Activated CD4-positive, alpha-beta memory T cell treated with anti-CD3 and anti-CD28 coated beads for 36 hours (primary cell): ENCODE measurements at regions of chr19 and their contacts with region 1.

Region 1: GRCh38 chr19:8158411-8159074 is 9.2 kb upstream of the FBN3 start:
- DNase-seq: peak; percentile 40
- H3K4me3 Mint-ChIP-seq: no peak overlapping the region
- H3K27ac Mint-ChIP-seq: no peak overlapping the region
- H3K4me1 Mint-ChIP-seq: peaks cover 4% of the 10 kb centered on the region
- H3K27me3 Mint-ChIP-seq: peaks cover 17% of the 10 kb centered on the region

Region 2: GRCh38 chr19:8108560-8109445 is 49.7 kb before region 1 on chr19:
- CTCF ChIA-PET with region 1: no interaction called
- POLR2A ChIA-PET with region 1: no interaction called
- intact Hi-C with region 1: no loop called
- DNase-seq: no peak
- H3K4me3 Mint-ChIP-seq: no peak overlapping the region
- H3K27ac Mint-ChIP-seq: no peak overlapping the region
- H3K4me1 Mint-ChIP-seq: no peaks in the 10 kb centered on the region
- H3K27me3 Mint-ChIP-seq: peaks cover 12% of the 10 kb centered on the region

Region 3: DNA sequence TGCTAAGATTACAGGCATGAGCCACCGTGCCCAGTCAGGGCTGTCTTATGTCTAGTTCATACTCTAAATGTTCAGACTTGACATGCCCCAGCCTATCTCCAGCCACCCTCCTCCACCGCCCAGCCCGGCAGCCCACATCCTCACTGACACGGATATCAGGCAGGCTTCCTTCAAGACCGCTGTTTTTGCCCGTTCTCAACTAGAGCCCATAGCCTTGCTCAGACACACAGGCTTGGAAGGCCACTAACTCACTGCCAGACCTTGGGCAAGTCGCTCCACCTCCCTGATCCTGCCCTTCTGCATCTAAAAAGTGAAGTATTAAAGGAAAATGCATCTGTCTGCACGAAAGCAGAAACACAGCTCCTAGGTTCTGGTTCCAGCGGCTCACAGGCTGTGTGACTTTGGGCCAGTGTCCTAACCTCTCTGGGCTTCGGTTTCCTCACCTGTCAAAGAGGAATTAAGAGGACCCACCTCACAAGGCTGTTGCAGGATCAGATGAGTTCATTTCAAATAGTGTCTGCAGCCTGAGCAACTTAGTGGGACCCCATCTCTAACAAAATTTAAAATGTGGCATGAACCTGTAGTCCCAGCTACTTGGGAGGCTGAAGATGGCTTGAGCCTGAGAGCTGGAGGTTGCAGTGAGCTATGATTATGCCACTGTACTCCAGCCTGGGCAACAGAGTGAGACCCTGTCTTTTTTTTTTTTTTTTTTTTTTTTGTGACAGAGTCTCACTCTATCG is 36.2 kb after region 1 on chr19:
- CTCF ChIA-PET with region 1: interaction called, 4 read pairs
- POLR2A ChIA-PET with region 1: no interaction called
- intact Hi-C with region 1: loop called (anchors 2 kb)
- DNase-seq: peak; percentile 73
- H3K4me3 Mint-ChIP-seq: peak overlapping the region; percentile 37
- H3K27ac Mint-ChIP-seq: peak overlapping the region; percentile 90
- H3K4me1 Mint-ChIP-seq: peaks cover 39% of the 10 kb centered on the region
- H3K27me3 Mint-ChIP-seq: no peaks in the 10 kb centered on the region

Region 4: GRCh38 chr19:8252922-8253589 is 94.5 kb after region 1 on chr19:
- CTCF ChIA-PET with region 1: interaction called, 29 read pairs
- POLR2A ChIA-PET with region 1: no interaction called
- intact Hi-C with region 1: loop called (anchors 1 kb)
- DNase-seq: peak; percentile 89
- H3K4me3 Mint-ChIP-seq: no peak overlapping the region
- H3K27ac Mint-ChIP-seq: no peak overlapping the region
- H3K4me1 Mint-ChIP-seq: no peaks in the 10 kb centered on the region
- H3K27me3 Mint-ChIP-seq: no peaks in the 10 kb centered on the region

Region 5: DNA sequence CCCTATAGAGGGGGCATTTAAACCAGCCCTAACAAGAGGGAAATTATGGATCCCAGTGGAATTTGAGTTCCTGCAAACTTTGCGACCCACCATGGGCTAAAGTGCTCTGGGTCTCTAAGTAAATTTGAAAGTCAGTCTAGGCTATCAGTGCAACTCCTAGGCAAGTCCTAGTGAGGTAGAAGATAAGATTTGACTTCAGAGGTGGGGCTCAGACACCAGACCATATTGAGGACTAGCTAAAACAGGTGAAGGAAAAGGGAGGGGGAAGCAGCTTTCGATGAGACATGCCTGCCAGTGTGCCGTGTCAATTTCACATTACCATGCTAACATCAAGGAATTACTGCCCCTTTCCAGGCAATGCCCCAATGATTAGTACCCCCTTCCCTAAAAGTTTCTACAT is 111.2 kb after region 1 on chr19:
- CTCF ChIA-PET with region 1: interaction called, 3 read pairs
- POLR2A ChIA-PET with region 1: no interaction called
- intact Hi-C with region 1: loop called (anchors 5 kb)
- DNase-seq: no peak
- H3K4me3 Mint-ChIP-seq: peak overlapping the region; percentile 76
- H3K27ac Mint-ChIP-seq: peak overlapping the region; percentile 86
- H3K4me1 Mint-ChIP-seq: peaks cover 14% of the 10 kb centered on the region
- H3K27me3 Mint-ChIP-seq: no peaks in the 10 kb centered on the region